ENCODE measurements at regions of chr12 and their contacts with region 1.

Region 1: GRCh38 chr12:107079172-107080011 is 14.0 kb downstream of the CRY1 start:
- DNase-seq: peak in 1 of 35 experiments; percentile 52
- ATAC-seq: peak in 3 of 4 experiments; percentile 33 to 44 (median 43)
- H3K4me3 ChIP-seq: no peak overlapping the region
- H3K4me3 Mint-ChIP-seq: no peak overlapping the region
- H3K27ac ChIP-seq: no peak overlapping the region
- H3K27ac Mint-ChIP-seq: no peak overlapping the region
- H3K4me1 ChIP-seq: no peaks in the 10 kb centered on the region
- H3K4me1 Mint-ChIP-seq: peaks cover 20 to 29% (median 28%) of the 10 kb centered on the region in 3 donors
- H3K27me3 ChIP-seq: no peaks in the 10 kb centered on the region
- H3K27me3 Mint-ChIP-seq: no peaks in the 10 kb centered on the region

Region 2: GRCh38 chr12:106924268-106924861 is 155.0 kb before region 1 on chr12:
- CTCF ChIA-PET with region 1: no interaction called
- POLR2A ChIA-PET with region 1: no interaction called
- DNase-seq: no peak
- ATAC-seq: no peak
- H3K4me3 ChIP-seq: no peak overlapping the region
- H3K4me3 Mint-ChIP-seq: no peak overlapping the region
- H3K27ac ChIP-seq: no peak overlapping the region
- H3K27ac Mint-ChIP-seq: no peak overlapping the region
- H3K4me1 ChIP-seq: no peaks in the 10 kb centered on the region
- H3K4me1 Mint-ChIP-seq: peaks cover 2 to 5% (median 2%) of the 10 kb centered on the region in 3 donors
- H3K27me3 ChIP-seq: peaks cover 4% of the 10 kb centered on the region in 2 experiments
- H3K27me3 Mint-ChIP-seq: peaks cover 13 to 20% of the 10 kb centered on the region in 2 donors

Region 3: DNA sequence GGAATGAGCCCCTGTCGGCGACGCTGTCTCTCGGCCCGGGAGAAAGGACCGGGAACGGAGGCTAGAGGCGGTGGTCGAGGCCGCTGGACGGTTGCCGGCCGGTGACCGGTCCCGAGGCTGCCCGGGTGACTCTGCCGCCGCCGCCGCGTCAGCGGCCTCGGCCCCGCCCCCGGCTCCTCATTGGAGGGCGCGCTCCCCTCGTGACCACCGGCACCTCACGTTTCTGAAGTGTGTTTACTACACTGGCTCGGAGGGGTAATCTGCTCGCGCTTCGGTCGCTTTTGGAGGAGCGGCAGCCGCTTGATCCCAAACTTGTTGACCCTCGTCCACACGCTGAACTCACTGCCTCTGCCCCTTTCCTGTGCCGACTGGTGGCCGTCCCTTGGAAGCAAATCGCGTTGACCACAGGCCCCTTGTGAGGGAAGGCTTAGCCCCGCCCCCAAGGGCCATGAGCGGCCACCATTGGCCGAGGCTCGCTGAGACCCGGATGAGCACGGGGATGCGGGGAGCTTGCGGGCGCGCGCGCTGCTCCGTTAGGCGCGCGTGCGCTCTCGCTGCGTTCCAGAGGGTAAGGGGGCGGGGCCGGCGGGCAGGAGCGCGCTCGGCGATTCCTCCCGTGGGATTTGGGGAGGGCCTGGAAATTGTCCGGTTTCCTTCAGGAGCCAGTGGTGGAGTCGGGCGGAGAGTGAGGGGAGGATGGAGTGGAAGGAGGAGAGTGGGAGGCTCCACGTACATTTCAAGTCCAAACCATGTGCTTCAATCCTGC is 14.2 kb after region 1 on chr12 and contains the start of gene CRY1:
- CTCF ChIA-PET with region 1: interaction called in 1 of 2 experiments, 12 read pairs
- POLR2A ChIA-PET with region 1: interaction called in 1 of 2 experiments, 6 read pairs
- DNase-seq: peak; percentile 79 to 95 (median 90)
- ATAC-seq: peak; percentile 82 to 86 (median 84)
- H3K4me3 ChIP-seq: peak within 1 kb of the TSS; percentile 83 to 100
- H3K4me3 Mint-ChIP-seq: no peak within 1 kb of the TSS
- H3K27ac ChIP-seq: peak within 1 kb of the TSS; percentile 100
- H3K27ac Mint-ChIP-seq: peak within 1 kb of the TSS in 1 of 2 donors; percentile 100
- H3K4me1 ChIP-seq: peaks cover 8 to 28% of the 10 kb centered on the region in 2 experiments
- H3K4me1 Mint-ChIP-seq: peaks cover 13 to 16% (median 15%) of the 10 kb centered on the region in 3 donors
- H3K27me3 ChIP-seq: no peaks in the 10 kb centered on the region
- H3K27me3 Mint-ChIP-seq: peaks cover 5 to 13% of the 10 kb centered on the region in 2 donors
- total RNA-seq, gene CRY1: 31.4 to 58.1 (median 35.9) TPM

Region 4: GRCh38 chr12:107115119-107115518 is 35.7 kb after region 1 on chr12:
- CTCF ChIA-PET with region 1: no interaction called
- POLR2A ChIA-PET with region 1: no interaction called
- DNase-seq: no peak
- ATAC-seq: no peak
- H3K4me3 ChIP-seq: no peak overlapping the region
- H3K4me3 Mint-ChIP-seq: no peak overlapping the region
- H3K27ac ChIP-seq: no peak overlapping the region
- H3K27ac Mint-ChIP-seq: no peak overlapping the region
- H3K4me1 ChIP-seq: no peaks in the 10 kb centered on the region
- H3K4me1 Mint-ChIP-seq: no peaks in the 10 kb centered on the region
- H3K27me3 ChIP-seq: peaks cover 0 to 3% of the 10 kb centered on the region in 2 experiments
- H3K27me3 Mint-ChIP-seq: peaks cover 19 to 20% of the 10 kb centered on the region in 2 donors

Region 5: DNA sequence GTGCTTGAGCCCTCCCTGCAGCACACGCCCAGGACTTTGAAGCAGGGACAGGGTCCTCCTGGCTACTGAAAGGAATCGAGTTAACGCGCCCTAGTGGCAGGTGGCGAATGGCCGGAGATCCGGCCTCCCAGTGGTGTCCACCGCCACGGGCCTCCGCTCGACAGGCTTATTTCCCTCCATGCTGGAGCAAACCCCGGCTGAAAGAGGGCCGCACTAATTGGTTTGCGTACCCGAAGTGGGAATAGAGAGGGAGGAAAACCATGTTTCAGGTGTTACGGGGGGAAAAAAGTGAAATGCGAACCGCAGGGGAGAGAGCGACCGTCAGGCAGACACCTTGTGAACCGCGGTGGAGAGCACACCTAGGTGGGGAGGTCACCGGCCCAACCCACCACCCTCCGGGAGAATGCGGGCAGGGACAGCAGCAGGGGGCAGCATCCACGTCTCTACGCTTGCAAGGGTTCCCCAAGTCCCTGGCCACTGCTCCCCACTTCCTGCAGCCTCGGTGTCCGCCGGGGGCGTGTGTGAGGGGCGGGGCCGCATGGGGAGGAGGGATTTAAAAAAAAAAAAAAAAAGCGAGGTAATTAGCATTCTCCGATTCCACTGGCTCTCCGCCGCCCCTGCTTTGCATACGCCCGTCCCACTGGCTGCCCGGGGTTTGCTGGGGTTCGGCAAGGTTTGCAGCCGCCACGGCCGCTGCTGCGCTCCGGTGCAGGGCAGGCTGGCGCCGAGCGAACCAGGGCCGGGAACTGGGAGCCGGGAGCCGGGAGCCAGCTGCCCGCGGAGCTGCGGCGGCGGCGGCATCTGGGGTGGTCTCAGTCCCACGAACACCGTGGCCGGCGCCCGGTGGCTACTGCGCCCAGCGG is 238.6 kb after region 1 on chr12:
- CTCF ChIA-PET with region 1: no interaction called
- POLR2A ChIA-PET with region 1: no interaction called
- DNase-seq: peak; percentile 61 to 90 (median 85)
- ATAC-seq: peak; percentile 64 to 71 (median 68)
- H3K4me3 ChIP-seq: peak overlapping the region; percentile 83 to 94
- H3K4me3 Mint-ChIP-seq: peak overlapping the region; percentile 80 to 84 (median 81)
- H3K27ac ChIP-seq: no peak overlapping the region
- H3K27ac Mint-ChIP-seq: peak overlapping the region; percentile 60 to 68
- H3K4me1 ChIP-seq: peaks cover 12 to 45% of the 10 kb centered on the region in 2 experiments
- H3K4me1 Mint-ChIP-seq: peaks cover 24 to 38% (median 32%) of the 10 kb centered on the region in 3 donors
- H3K27me3 ChIP-seq: peaks cover 0 to 18% of the 10 kb centered on the region in 2 experiments
- H3K27me3 Mint-ChIP-seq: peaks cover 0 to 14% of the 10 kb centered on the region in 2 donors

Measured in T-cell (primary cell).